Sciatic nerve (tissue), 2 donors: ENCODE measurements at regions of chr15 and their contacts with region 1.

Region 1: GRCh38 chr15:49843725-49844124 is 222.9 kb downstream of the DTWD1 start:
- DNase-seq: no peak
- ATAC-seq: no peak

Region 2: GRCh38 chr15:48833506-48834231 is 1010.1 kb before region 1 on chr15:
- intact Hi-C with region 1: no loop called
- DNase-seq: no peak
- ATAC-seq: no peak

Region 3: DNA sequence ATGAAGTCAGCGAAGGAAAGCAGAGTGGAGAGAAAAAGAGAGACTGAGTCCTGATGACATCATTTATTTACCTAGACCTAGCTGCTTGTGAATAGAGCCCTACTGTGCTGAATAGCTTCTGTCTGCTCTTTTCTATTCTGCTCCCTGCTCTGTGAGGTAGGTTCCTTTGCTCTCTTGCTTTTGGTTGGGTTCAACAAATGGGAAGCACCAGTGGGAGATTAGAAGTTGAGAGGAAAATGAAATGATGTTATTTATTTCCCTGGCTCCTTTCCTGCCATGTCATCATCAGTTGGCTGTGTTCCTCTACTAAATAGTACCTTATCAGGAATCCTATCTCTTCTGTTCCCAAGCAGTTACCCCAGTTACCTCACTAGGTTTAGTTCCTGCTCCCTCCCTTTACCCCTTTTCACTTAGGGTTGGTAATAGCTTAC is 199.3 kb before region 1 on chr15:
- intact Hi-C with region 1: no loop called
- DNase-seq: no peak
- ATAC-seq: peak; percentile 53

Region 4: GRCh38 chr15:50169095-50169411 is 325.3 kb after region 1 on chr15:
- intact Hi-C with region 1: loop called (anchors 2 kb)
- DNase-seq: no peak
- ATAC-seq: no peak

Region 5: GRCh38 chr15:50424066-50424890 is 580.6 kb after region 1 on chr15 and contains the start of gene USP8:
- intact Hi-C with region 1: no loop called
- DNase-seq: peak; percentile 98
- ATAC-seq: peak; percentile 99
- total RNA-seq, gene USP8: 77.9 TPM